Activated B cell treated with CpG ODN at 0.5 μM for 24 hours (primary cell): ENCODE measurements at regions of chr3 and their contacts with region 1.

Region 1: DNA sequence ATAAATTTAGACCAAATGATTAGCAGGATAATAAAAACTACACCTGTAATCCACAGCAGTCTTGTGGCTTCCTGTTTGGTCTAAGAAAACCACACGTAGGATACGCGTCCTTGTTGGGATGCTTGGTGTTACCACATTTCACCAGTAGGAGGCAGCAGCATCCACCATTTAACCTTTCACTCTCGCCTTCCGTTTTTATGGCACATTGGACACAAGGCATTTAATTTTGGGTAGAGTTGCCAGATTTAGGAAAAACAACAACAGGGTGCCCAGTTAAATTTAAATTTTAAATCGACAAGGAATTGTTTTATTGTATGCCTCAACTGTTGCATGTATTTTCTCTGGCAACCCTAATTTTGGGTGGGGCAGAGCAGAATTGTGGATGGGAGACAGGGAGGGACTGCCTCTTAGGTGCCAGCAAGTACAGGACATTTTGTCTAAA is 6.3 kb downstream of the LRRC31 start:
- DNase-seq: peak; percentile 49
- ATAC-seq: peak; percentile 50
- H3K4me3 Mint-ChIP-seq: peak overlapping the region; percentile 19
- H3K27ac Mint-ChIP-seq: peak overlapping the region; percentile 35
- H3K4me1 Mint-ChIP-seq: peaks cover 30% of the 10 kb centered on the region
- H3K27me3 Mint-ChIP-seq: no peaks in the 10 kb centered on the region
- CTCF ChIP-seq: peak; percentile 94

Region 2: GRCh38 chr3:169772897-169773828 is 90.3 kb before region 1 on chr3 and contains the start of gene MYNN:
- CTCF ChIA-PET with region 1: interaction called, 3 read pairs
- POLR2A ChIA-PET with region 1: interaction called, 14 read pairs
- intact Hi-C with region 1: no loop called
- DNase-seq: peak; percentile 91
- ATAC-seq: peak; percentile 77
- H3K4me3 Mint-ChIP-seq: peak within 1 kb of the TSS; percentile 99
- H3K27ac Mint-ChIP-seq: peak within 1 kb of the TSS; percentile 99
- H3K4me1 Mint-ChIP-seq: peaks cover 50% of the 10 kb centered on the region
- H3K27me3 Mint-ChIP-seq: no peaks in the 10 kb centered on the region
- CTCF ChIP-seq: no peak
- total RNA-seq, gene MYNN: 23.9 and 24.8 TPM in 2 replicates

Region 3: GRCh38 chr3:169923189-169923588 is 59.7 kb after region 1 on chr3:
- CTCF ChIA-PET with region 1: no interaction called
- POLR2A ChIA-PET with region 1: interaction called, 4 read pairs
- intact Hi-C with region 1: loop called (anchors 2 kb)
- DNase-seq: no peak
- ATAC-seq: no peak
- H3K4me3 Mint-ChIP-seq: no peak overlapping the region
- H3K27ac Mint-ChIP-seq: peak overlapping the region; percentile 19
- H3K4me1 Mint-ChIP-seq: no peaks in the 10 kb centered on the region
- H3K27me3 Mint-ChIP-seq: no peaks in the 10 kb centered on the region
- CTCF ChIP-seq: no peak

Region 4: GRCh38 chr3:169966428-169966950 is 103.0 kb after region 1 on chr3 and contains the start of gene SEC62:
- CTCF ChIA-PET with region 1: interaction called, 61 read pairs
- POLR2A ChIA-PET with region 1: interaction called, 83 read pairs
- intact Hi-C with region 1: loop called (anchors 1 kb)
- DNase-seq: peak; percentile 94
- ATAC-seq: peak; percentile 86
- H3K4me3 Mint-ChIP-seq: peak within 1 kb of the TSS; percentile 99
- H3K27ac Mint-ChIP-seq: peak within 1 kb of the TSS; percentile 99
- H3K4me1 Mint-ChIP-seq: peaks cover 87% of the 10 kb centered on the region
- H3K27me3 Mint-ChIP-seq: no peaks in the 10 kb centered on the region
- CTCF ChIP-seq: no peak
- total RNA-seq, gene SEC62: 140 and 165 TPM in 2 replicates

Region 5: DNA sequence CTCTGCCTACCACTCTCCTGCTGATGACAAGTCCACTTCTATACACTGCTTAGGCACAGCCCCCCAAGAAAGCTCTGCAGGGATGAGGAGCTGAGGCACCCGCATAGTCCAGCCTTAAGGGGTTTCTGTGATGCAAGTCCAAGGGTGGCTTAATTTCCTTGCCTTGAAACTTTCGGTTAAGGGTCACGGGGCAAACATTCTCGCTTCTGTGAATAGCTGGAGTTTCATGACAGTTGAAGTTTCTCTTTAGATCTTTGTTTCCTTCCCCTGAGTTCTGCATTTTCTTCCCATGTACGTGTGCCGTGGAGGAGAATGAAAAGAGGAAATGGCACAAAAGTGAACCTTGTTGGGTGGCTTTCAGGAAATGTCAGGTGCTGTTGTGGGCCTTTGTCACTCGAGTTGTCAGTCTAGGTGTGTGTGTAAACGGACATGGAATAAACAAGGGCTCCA is 181.3 kb after region 1 on chr3:
- CTCF ChIA-PET with region 1: interaction called, 3 read pairs
- POLR2A ChIA-PET with region 1: interaction called, 12 read pairs
- intact Hi-C with region 1: no loop called
- DNase-seq: peak; percentile 45
- ATAC-seq: peak; percentile 77
- H3K4me3 Mint-ChIP-seq: peak overlapping the region; percentile 64
- H3K27ac Mint-ChIP-seq: peak overlapping the region; percentile 87
- H3K4me1 Mint-ChIP-seq: peaks cover 65% of the 10 kb centered on the region
- H3K27me3 Mint-ChIP-seq: no peaks in the 10 kb centered on the region
- CTCF ChIP-seq: no peak

Region 6: DNA sequence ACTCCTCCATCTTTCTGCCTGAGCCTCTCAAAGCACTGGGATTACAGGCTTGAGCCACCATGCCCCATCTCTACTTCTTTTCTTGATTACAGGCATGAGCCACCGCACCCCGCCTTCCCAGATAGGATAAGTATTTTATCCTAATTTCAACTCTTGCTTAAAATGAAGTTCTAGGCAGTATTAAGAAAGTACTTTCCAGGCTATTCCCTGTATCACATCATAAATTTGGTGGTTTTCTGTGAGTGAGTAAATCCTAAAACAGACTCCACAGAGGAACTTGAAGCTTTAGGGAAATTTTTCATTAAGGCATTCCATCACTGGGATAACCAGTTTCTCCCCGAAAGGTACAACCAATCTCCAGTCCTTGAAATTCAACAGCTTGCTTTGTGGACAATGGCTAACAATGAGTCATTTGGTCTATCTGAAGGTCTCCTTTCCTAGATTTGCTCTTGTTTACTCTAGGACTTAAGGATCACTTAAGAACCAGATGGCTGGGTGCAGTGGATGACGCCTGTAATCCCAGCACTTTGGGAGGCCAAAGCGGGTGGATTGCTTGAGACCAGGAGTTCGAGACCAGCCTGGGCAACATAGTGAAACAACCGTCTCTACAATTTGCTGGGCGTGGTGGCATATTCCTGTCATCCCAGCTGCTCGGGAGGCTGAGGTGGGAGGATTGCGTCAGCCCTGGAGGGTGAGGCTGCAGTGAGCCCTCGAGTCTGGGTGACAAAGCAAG is 444.4 kb after region 1 on chr3:
- CTCF ChIA-PET with region 1: interaction called, 3 read pairs
- POLR2A ChIA-PET with region 1: no interaction called
- intact Hi-C with region 1: loop called (anchors 1 kb)
- DNase-seq: no peak
- ATAC-seq: no peak
- H3K4me3 Mint-ChIP-seq: no peak overlapping the region
- H3K27ac Mint-ChIP-seq: no peak overlapping the region
- H3K4me1 Mint-ChIP-seq: peaks cover 10% of the 10 kb centered on the region
- H3K27me3 Mint-ChIP-seq: no peaks in the 10 kb centered on the region
- CTCF ChIP-seq: no peak

Region 7: DNA sequence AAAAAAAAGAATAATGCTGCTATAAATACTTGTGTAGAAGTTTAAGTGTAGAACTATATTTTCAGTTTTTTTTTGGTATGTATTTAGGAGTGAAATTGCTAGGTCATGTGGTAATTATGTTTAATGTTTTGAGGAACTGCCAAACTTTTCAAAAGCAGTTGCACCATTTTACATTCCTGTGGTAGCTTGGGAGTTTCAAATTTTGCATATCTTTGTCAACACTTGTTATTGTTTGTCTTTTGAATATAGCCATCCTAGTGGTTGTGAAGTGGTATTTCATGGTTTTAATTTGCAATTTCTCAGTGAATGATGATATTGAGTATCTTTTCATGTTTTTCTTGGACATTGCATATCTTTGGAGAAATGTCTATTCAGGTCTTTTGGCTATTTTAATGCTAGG is 524.5 kb after region 1 on chr3:
- CTCF ChIA-PET with region 1: no interaction called
- POLR2A ChIA-PET with region 1: no interaction called
- intact Hi-C with region 1: no loop called
- DNase-seq: no peak
- ATAC-seq: no peak
- H3K4me3 Mint-ChIP-seq: no peak overlapping the region
- H3K27ac Mint-ChIP-seq: no peak overlapping the region
- H3K4me1 Mint-ChIP-seq: peaks cover 26% of the 10 kb centered on the region
- H3K27me3 Mint-ChIP-seq: no peaks in the 10 kb centered on the region
- CTCF ChIP-seq: no peak